Gastrocnemius medialis (tissue), 4 donors: ENCODE measurements at regions of chr2 and their contacts with region 1.

Region 1: DNA sequence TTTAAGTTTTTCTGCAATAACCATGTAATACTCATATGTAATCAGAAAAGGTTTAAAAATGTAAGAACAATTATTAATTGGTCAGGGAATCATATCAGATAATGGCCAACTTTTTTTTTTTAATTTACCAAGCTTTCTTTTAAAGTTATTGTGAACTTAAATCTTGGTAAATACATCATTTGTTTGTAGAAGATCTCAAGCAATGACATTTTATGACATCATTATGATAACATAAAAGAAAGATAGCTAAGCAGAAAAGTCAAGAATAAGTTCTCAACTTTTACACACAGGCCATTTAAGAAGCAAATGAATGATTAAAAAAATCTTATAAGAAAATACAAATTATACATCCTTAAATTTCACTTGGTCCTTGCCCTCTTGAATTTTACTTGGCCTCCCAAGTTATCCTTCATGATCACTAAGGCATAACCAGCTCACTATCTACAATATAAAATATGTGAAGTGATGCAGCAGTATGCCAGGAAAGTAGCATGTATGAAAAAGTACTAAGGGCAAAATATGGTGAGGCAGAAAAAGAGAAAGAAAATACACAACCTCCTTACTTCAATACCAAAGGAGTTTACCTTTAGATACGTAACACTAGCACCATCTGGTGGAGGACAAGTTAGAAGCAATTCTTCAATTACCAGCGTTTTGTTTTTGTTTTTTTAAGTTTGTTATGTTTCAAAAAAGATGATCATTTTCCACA is 116.6 kb downstream of the SRBD1 start:
- DNase-seq: no peak
- ATAC-seq: peak in 1 of 2 donors; percentile 60
- H3K4me3 ChIP-seq: no peak overlapping the region
- H3K27ac ChIP-seq: no peak overlapping the region
- H3K4me1 ChIP-seq: no peaks in the 10 kb centered on the region
- H3K27me3 ChIP-seq: no peaks in the 10 kb centered on the region
- CTCF ChIP-seq: peak; percentile 72 to 87 (median 81)
- POLR2A ChIP-seq: no peak

Region 2: GRCh38 chr2:44975571-44976450 is 518.6 kb before region 1 on chr2:
- in situ Hi-C with region 1: loop called (anchors 5 kb)
- intact Hi-C with region 1: loop called (anchors 1 kb)
- DNase-seq: no peak
- ATAC-seq: no peak
- H3K4me3 ChIP-seq: no peak overlapping the region
- H3K27ac ChIP-seq: no peak overlapping the region
- H3K4me1 ChIP-seq: no peaks in the 10 kb centered on the region
- H3K27me3 ChIP-seq: peaks cover 5 to 17% (median 16%) of the 10 kb centered on the region in 3 donors
- CTCF ChIP-seq: no peak
- POLR2A ChIP-seq: no peak

Region 3: DNA sequence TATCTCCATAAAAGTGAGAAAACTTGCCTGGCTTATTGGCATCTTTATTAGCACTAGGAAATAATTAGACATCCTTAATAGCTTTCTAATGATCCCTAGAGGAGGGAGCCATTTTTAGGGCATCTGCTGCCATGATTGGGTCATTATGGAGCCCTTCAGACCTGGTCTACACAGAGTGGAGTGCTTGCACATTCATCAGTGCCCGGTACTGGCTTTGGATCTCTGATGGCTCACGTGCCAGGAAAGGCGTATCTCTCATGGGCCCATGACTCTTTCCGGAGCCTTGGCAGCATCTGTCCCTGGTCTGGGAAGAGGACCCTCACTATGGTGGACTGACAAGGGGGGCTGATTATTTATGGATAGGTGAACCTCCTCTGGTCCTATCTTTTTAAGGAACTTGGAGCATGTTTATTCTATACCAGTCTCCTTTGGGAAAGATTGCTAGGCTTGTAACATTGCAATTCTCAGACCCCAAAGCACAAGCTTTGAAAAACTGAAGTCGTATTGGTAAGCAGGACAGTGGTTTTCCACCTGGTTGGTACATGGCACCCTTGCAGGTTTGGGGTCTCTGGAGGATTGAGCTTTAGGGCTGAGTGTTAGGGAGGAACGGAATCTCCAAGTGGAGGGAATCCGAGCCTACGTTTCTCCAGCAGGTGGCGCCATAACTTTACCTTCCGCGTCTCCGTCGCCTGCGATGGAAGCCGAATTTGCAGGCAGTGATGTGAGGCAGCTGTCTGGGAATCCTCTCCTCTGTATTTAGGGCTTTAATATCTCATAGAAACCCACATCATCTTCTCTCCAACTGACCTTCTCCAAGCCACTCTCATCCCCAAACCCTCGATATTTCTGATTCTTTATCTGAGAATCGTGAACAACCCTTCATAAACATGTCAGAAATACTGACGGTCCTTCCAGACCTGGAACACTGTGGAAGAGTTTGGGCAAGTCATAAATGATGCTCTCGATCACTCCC is 513.0 kb before region 1 on chr2:
- in situ Hi-C with region 1: loop called (anchors 5 kb)
- intact Hi-C with region 1: loop called (anchors 1 kb)
- DNase-seq: peak; percentile 41 to 56
- ATAC-seq: peak; percentile 86 to 93
- H3K4me3 ChIP-seq: no peak overlapping the region
- H3K27ac ChIP-seq: no peak overlapping the region
- H3K4me1 ChIP-seq: no peaks in the 10 kb centered on the region
- H3K27me3 ChIP-seq: peaks cover 0 to 2% (median 0%) of the 10 kb centered on the region in 3 donors
- CTCF ChIP-seq: peak; percentile 71 to 92 (median 89)
- POLR2A ChIP-seq: no peak